Transverse colon (tissue), 4 donors: ENCODE measurements at regions of chr9 and their contacts with region 1.

Region 1: DNA sequence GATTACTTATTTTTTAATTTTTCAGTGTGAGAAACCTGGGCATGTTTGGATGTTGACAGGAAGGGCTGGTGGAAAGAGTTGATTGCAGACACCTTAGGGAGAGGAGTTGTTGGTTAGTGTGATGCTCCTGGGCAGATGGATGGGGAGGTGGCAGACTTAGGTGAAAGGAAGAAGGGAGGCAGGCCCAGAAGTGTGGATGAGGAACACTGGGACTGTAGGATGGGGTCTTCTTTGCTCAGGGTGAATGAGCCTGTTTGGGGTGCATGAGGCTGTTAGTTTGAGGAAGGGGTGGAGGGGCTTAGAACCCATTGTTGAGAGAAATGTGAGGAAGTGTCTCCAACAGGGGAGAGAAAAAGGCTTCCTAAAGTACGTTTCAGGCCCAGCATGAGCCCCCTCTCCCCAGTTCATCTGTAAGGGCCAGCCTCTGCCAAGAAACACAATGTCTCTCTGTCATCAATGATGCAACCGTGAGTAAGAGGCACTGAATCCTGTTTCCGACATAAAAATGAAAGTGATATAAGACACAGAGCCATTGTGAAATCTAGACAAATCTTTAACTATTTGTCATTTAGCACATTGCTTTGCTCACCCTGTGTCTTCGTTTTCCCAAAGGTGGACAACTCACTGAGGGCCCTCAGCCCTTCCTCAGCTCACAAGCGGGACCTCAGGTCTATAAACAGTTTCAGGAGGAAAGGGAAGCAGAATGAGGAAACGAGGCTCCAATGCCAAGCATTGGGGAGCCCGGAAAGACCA is 58.7 kb upstream of the KLF4 start:
- DNase-seq: no peak
- H3K4me3 ChIP-seq: no peak overlapping the region
- H3K27ac ChIP-seq: peak overlapping the region in 2 of 4 donors; percentile 13 to 15
- H3K4me1 ChIP-seq: peaks cover 0 to 16% (median 0%) of the 10 kb centered on the region in 4 donors
- H3K27me3 ChIP-seq: no peaks in the 10 kb centered on the region
- CTCF ChIP-seq: no peak
- EP300 ChIP-seq: no peak
- POLR2A ChIP-seq: no peak

Region 2: DNA sequence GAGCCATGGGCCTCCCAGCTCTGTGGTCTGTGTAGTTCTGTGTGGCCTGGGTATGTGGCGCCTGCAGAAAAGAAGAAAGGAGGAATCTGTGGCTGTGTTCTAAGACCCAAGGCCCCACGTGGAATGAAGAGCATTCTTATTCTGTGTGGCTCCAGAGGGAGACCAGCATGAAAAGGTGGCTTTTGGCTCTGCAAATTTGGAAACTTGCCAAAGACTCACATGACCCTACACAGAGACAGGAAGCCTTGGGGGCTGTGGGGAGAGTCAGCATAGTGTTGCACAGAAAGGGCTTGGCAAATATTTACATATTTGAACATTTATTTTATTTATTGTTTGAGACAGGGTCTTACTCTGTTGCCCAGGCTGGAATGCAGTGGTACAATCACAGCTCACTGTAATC is 1660.5 kb before region 1 on chr9:
- in situ Hi-C with region 1: no loop called
- intact Hi-C with region 1: loop called (anchors 5 kb)
- DNase-seq: no peak
- H3K4me3 ChIP-seq: no peak overlapping the region
- H3K27ac ChIP-seq: no peak overlapping the region
- H3K4me1 ChIP-seq: no peaks in the 10 kb centered on the region
- H3K27me3 ChIP-seq: no peaks in the 10 kb centered on the region
- CTCF ChIP-seq: no peak
- EP300 ChIP-seq: no peak
- POLR2A ChIP-seq: no peak

Region 3: GRCh38 chr9:107600060-107600573 is 51.9 kb after region 1 on chr9:
- in situ Hi-C with region 1: no loop called
- intact Hi-C with region 1: no loop called
- DNase-seq: no peak
- H3K4me3 ChIP-seq: no peak overlapping the region
- H3K27ac ChIP-seq: peak overlapping the region; percentile 69 to 79 (median 74)
- H3K4me1 ChIP-seq: peaks cover 4 to 59% (median 39%) of the 10 kb centered on the region in 4 donors
- H3K27me3 ChIP-seq: no peaks in the 10 kb centered on the region
- CTCF ChIP-seq: no peak
- EP300 ChIP-seq: no peak
- POLR2A ChIP-seq: no peak

Region 4: DNA sequence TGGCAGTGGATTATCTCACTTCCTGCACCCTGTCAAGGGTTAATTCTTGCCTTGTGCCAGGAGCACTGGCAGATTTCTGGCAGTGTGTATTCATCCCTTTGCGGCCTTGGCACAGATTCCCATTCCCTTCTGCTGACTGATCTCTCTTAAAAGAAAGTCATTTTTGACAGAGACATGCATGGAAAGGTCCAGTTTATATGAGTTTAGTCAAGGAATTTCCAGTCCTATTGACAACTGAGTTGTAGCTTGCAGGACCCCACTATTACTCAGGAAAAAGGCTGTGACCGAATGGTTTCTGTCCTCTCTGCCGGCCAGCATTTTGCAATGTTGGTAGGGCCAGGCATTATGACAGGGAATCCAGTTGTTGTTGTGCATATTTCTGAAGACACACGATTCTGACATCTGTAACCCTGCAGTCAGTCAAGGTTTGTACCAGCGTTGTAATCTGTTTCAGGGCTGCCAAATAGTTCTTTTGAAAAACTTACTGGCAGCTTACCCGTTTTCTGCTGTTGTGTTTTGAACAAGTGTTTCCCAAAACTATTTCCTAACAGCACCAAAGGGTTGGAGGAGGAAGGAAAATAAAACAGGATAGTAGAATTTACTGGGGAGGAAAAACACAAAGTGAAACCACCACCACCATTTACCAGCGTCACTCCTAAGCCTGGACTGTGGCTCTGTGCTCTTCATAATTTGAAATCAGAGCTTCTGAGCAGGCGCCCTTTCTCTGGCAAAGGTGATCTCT is 184.7 kb after region 1 on chr9:
- in situ Hi-C with region 1: no loop called
- intact Hi-C with region 1: no loop called
- DNase-seq: no peak
- H3K4me3 ChIP-seq: peak overlapping the region in 1 of 4 donors; percentile 24
- H3K27ac ChIP-seq: peak overlapping the region; percentile 67 to 86 (median 80)
- H3K4me1 ChIP-seq: peaks cover 16 to 30% (median 18%) of the 10 kb centered on the region in 4 donors
- H3K27me3 ChIP-seq: no peaks in the 10 kb centered on the region
- CTCF ChIP-seq: no peak
- EP300 ChIP-seq: no peak
- POLR2A ChIP-seq: no peak